BJ (cell line): ENCODE measurements at regions of chr1 and their contacts with region 1.

Region 1: DNA sequence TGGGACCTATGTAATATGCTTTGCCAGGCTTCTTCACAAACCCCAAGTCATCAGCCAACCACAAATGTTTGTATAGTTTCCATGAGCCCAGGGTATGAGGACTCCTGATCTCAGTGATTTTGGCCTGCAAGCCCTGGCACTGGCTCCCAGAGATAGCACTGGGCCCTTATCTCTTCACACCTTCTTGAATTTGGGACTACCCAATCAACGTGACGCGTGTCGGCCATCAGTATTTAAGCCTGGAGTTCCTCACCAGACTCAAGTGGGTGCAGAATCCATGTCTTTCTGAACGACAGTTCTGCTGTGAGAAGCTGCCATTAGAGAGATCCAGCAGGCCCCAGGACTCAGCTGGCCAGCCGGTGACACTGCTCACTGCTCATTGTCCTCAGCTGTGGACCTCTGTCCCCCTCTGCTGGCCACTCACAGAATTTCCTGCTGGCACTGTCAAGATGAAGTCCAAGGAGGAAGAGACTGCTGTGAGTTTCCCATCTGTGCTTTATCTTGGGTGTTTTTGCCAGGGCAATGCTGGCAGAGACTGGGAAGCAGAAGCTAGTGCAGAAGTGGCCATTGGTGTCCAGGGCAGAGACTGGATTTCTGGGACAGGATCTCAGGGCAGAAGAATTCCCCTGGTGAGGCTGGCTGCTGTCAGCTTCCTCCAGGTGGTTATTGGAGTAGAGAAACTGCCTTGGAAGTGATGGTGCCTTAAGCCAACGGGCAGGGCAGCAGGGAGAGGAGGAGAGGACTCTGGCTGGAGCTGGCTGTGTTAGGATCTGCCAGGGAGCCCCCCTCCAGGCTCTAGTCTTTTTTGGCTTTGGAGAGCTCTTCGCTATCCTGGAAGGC is 28.4 kb downstream of the TMCC2 start:
- DNase-seq: no peak
- H3K4me3 ChIP-seq: no peak overlapping the region
- H3K27me3 ChIP-seq: no peaks in the 10 kb centered on the region
- CTCF ChIP-seq: peak; percentile 95

Region 2: GRCh38 chr1:204989266-204990058 is 266.7 kb before region 1 on chr1:
- CTCF ChIA-PET with region 1: interaction called, 139 read pairs
- POLR2A ChIA-PET with region 1: no interaction called
- DNase-seq: peak; percentile 16
- H3K4me3 ChIP-seq: no peak overlapping the region
- H3K27me3 ChIP-seq: no peaks in the 10 kb centered on the region
- CTCF ChIP-seq: peak; percentile 99

Region 3: DNA sequence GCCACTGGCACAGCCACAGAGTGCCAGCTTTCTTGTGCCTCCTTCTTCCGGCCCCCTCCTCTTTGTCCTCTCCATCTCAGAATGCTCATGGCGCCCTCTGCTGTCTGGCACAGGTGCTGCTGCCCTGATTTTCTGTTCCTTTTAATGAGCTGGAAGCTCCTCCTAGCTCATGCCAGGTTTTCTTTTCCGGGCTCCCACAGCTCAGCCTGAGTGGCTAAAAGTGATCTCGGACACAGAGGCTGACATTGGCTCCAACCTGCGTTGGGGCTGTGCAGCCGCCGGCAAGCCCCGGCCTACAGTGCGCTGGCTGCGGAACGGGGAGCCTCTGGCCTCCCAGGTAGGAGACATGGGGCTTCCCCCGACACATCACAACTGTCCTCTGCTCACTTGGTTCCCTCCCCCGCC is 194.5 kb before region 1 on chr1:
- CTCF ChIA-PET with region 1: interaction called, 44 read pairs
- POLR2A ChIA-PET with region 1: no interaction called
- DNase-seq: no peak
- H3K4me3 ChIP-seq: no peak overlapping the region
- H3K27me3 ChIP-seq: no peaks in the 10 kb centered on the region; the same call in none of the 2 replicates
- CTCF ChIP-seq: peak; percentile 91

Region 4: GRCh38 chr1:205121660-205122488 is 134.3 kb before region 1 on chr1 and contains the start of gene RBBP5:
- CTCF ChIA-PET with region 1: interaction called, 32 read pairs
- POLR2A ChIA-PET with region 1: no interaction called
- DNase-seq: peak; percentile 86
- H3K4me3 ChIP-seq: peak within 1 kb of the TSS; percentile 76
- H3K27me3 ChIP-seq: no peaks in the 10 kb centered on the region
- CTCF ChIP-seq: peak; percentile 92
- polyA plus RNA-seq, gene RBBP5: 6.4 and 10.8 TPM in 2 replicates

Region 5: GRCh38 chr1:205227584-205228006 is 28.6 kb before region 1 on chr1 and contains the start of gene TMCC2:
- CTCF ChIA-PET with region 1: interaction called, 106 read pairs
- POLR2A ChIA-PET with region 1: no interaction called
- DNase-seq: no peak
- H3K4me3 ChIP-seq: peak within 1 kb of the TSS; percentile 71
- H3K27me3 ChIP-seq: peaks cover 2% of the 10 kb centered on the region
- CTCF ChIP-seq: 0 out of 2 replicates have a peak, but pooled peaks have one; percentile 8
- polyA plus RNA-seq, gene TMCC2: 2.4 and 3.4 TPM in 2 replicates

Region 6: DNA sequence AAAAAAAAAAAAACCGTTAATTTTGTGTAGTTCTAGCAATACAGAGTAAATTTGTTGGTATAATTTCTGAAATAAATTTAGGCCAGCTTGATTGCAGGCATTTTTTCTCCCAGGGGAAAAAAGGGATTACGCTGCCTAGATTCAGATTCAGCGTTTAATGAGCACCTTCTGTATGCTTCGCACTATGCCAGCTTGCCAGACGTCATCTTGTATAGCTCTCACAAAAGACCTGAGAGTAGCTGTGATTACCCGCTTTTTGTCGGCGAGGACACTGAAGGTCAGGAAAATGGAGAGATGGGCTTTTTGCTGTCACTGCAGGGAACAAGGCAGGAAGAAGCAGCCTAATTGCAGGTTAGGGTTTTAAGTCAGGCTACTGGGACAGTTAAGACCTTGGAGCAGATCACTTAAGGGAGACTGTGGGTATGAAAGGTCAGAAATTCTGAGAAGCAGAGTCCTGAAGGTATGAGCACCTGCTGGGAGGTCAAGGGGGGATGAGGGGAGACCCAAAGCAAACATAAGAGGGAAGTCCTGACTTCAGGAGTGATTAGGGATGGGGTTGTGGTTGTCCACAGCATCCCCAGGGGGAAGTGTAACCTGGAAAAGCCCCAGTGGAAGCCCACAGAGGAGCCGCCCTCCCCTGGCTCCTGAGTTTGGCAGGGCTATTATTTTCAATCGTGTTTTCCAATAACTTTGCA is 10.6 kb after region 1 on chr1:
- CTCF ChIA-PET with region 1: interaction called, 85 read pairs
- POLR2A ChIA-PET with region 1: no interaction called
- DNase-seq: no peak
- H3K4me3 ChIP-seq: no peak overlapping the region
- H3K27me3 ChIP-seq: no peaks in the 10 kb centered on the region
- CTCF ChIP-seq: no peak

Region 7: DNA sequence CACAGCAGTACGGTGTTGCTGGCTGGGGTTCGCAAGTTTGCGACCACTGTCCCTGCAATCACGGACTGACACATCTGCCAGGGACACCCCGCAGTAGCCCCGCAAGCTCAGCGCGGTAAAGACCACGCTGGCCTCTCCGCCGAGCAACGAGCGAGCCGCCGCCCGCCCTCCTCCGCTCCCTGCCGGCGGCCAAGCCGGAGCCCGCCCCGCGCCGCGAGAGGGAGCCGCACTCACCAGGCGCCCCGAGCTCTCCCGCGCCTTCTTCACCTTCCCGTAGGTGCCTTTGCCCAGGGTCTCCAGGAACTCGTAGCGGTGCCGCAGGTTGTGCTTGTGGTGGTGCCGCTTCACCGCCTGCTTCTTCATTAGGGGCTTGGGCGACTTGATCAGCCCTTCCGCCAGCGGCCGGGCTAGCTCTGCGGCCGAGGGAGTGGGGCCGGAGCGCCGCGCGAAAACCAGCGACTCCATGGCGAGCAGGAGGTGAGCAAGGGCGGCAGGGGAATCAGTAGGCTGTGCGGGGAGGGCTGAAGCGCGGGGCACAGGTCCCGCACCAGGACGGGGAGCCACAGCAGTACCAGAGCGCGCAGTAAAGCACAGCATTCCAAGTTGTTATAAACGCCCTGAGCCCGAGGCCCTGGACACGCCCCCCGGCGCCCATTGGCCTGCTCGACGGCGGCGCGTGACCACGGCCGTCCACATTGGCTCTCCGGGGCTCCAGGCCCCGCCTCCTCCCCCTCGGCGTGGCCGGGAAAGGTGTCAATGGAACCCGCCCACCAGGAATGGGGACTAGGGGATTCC is 65.2 kb after region 1 on chr1 and contains the start of gene NUAK2:
- CTCF ChIA-PET with region 1: interaction called, 16 read pairs
- POLR2A ChIA-PET with region 1: no interaction called
- DNase-seq: no peak
- H3K4me3 ChIP-seq: peak within 1 kb of the TSS; percentile 84
- H3K27me3 ChIP-seq: no peaks in the 10 kb centered on the region; the same call in 1 of the 2 replicates
- CTCF ChIP-seq: peak; percentile 37; the same call in 1 of the 2 replicates
- polyA plus RNA-seq, gene NUAK2: 3.4 and 5.8 TPM in 2 replicates

Region 8: GRCh38 chr1:205375835-205376545 is 119.8 kb after region 1 on chr1:
- CTCF ChIA-PET with region 1: no interaction called
- POLR2A ChIA-PET with region 1: no interaction called
- DNase-seq: peak; percentile 10
- H3K4me3 ChIP-seq: no peak overlapping the region
- H3K27me3 ChIP-seq: peaks cover 3% of the 10 kb centered on the region; the same call in 1 of the 2 replicates
- CTCF ChIP-seq: 0 out of 2 replicates have a peak, but pooled peaks have one; percentile 3